K562 (cell line): ENCODE measurements at regions of chrX and their contacts with region 1.

Region 1: GRCh38 chrX:68571610-68572311 is 72.9 kb downstream of the YIPF6 start:
- DNase-seq: peak; percentile 30 to 77 (median 42)
- ATAC-seq: peak; percentile 94
- H3K4me3 ChIP-seq: no peak overlapping the region
- H3K27ac ChIP-seq: peak overlapping the region; percentile 95
- H3K4me1 ChIP-seq: peaks cover 3 to 33% of the 10 kb centered on the region in 2 experiments; a peak in 3 of 5 replicates
- H3K27me3 ChIP-seq: no peaks in the 10 kb centered on the region
- CTCF ChIP-seq: no peak
- EP300 ChIP-seq: peak; percentile 64; the same call in 1 of the 2 replicates
- POLR2A ChIP-seq: no peak
- RAD21 ChIP-seq: no peak

Region 2: DNA sequence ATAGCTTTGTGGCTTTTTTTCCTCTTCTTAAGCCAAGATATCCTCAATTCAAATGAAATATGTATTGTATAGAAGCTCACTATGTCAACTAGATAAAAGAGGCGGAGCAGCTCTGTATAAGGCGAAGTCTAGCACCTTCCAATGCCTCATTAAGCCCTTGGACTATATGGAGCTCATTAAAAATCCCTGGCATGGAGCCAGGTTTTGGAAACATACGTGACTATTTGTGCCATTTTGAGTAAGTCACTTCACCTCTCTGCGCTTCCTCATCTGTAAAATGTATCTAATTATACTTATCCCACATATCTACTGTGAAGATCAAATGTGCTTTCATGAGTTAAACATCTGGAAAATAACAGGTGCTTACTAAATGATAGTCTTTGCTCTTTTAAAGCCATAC is 15.7 kb before region 1 on chrX:
- CTCF ChIA-PET with region 1: no interaction called
- POLR2A ChIA-PET with region 1: no interaction called
- in situ Hi-C with region 1: no loop called
- intact Hi-C with region 1: no loop called
- DNase-seq: no peak
- ATAC-seq: no peak
- H3K4me3 ChIP-seq: no peak overlapping the region
- H3K27ac ChIP-seq: no peak overlapping the region
- H3K4me1 ChIP-seq: no peaks in the 10 kb centered on the region
- H3K27me3 ChIP-seq: no peaks in the 10 kb centered on the region
- CTCF ChIP-seq: no peak
- EP300 ChIP-seq: no peak
- POLR2A ChIP-seq: no peak
- RAD21 ChIP-seq: no peak

Region 3: GRCh38 chrX:68584221-68584620 is 12.5 kb after region 1 on chrX:
- CTCF ChIA-PET with region 1: no interaction called
- POLR2A ChIA-PET with region 1: interaction called, 7 read pairs
- in situ Hi-C with region 1: no loop called
- intact Hi-C with region 1: loop called (anchors 2 kb)
- DNase-seq: peak; percentile 35 to 65 (median 38)
- ATAC-seq: peak; percentile 70
- H3K4me3 ChIP-seq: no peak overlapping the region
- H3K27ac ChIP-seq: peak overlapping the region; percentile 43; the same call in 2 of the 3 replicates
- H3K4me1 ChIP-seq: peaks cover 0 to 20% of the 10 kb centered on the region in 2 experiments; a peak in 2 of 5 replicates
- H3K27me3 ChIP-seq: no peaks in the 10 kb centered on the region
- CTCF ChIP-seq: no peak
- EP300 ChIP-seq: peak; percentile 33; the same call in 1 of the 2 replicates
- POLR2A ChIP-seq: no peak
- RAD21 ChIP-seq: no peak; a peak in 1 of 4 replicates

Region 4: GRCh38 chrX:68686097-68686977 is 114.6 kb after region 1 on chrX:
- CTCF ChIA-PET with region 1: no interaction called
- POLR2A ChIA-PET with region 1: no interaction called
- in situ Hi-C with region 1: no loop called
- intact Hi-C with region 1: loop called (anchors 5 kb)
- DNase-seq: peak; percentile 50 to 74 (median 56)
- ATAC-seq: peak; percentile 84
- H3K4me3 ChIP-seq: peak overlapping the region; percentile 45
- H3K27ac ChIP-seq: peak overlapping the region; percentile 80
- H3K4me1 ChIP-seq: peaks cover 17 to 21% of the 10 kb centered on the region in 2 experiments; a peak in 4 of 5 replicates
- H3K27me3 ChIP-seq: no peaks in the 10 kb centered on the region
- CTCF ChIP-seq: peak in 1 of 3 experiments; percentile 23; a peak in 1 of 6 replicates
- EP300 ChIP-seq: no peak
- POLR2A ChIP-seq: peak; percentile 73
- RAD21 ChIP-seq: no peak